ENCODE measurements at regions of chr5 and their contacts with region 1.

Region 1: GRCh38 chr5:140432916-140433315 is 31.3 kb downstream of the ANKHD1 start:
- DNase-seq: no peak
- H3K4me3 ChIP-seq: no peak overlapping the region
- H3K27ac ChIP-seq: no peak overlapping the region
- H3K4me1 ChIP-seq: no peaks in the 10 kb centered on the region
- H3K27me3 ChIP-seq: no peaks in the 10 kb centered on the region
- CTCF ChIP-seq: no peak

Region 2: DNA sequence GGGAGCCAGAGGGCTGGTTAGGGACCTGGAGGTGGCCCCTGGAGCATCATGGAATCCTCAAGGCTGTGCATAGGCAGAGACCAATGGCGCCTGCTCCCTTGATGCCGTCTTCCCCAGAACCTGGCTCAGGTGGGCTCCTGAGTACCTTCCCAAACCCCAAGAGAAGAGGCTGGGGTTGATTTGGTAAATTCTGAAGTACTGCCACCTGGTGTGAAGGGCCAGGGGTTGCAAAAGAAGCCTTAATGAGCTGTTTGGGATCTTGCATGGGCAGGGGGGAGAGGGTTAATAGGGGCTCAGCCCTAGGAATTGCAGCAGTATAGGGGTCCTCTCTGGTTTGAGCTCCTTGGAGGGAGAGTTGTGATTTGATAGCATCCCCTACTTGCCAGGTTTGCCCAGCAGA is 205.9 kb before region 1 on chr5:
- CTCF ChIA-PET with region 1: no interaction called
- POLR2A ChIA-PET with region 1: no interaction called
- intact Hi-C with region 1: no loop called
- DNase-seq: no peak
- H3K4me3 ChIP-seq: no peak overlapping the region
- H3K27ac ChIP-seq: no peak overlapping the region
- H3K4me1 ChIP-seq: no peaks in the 10 kb centered on the region
- H3K27me3 ChIP-seq: no peaks in the 10 kb centered on the region
- CTCF ChIP-seq: no peak

Region 3: DNA sequence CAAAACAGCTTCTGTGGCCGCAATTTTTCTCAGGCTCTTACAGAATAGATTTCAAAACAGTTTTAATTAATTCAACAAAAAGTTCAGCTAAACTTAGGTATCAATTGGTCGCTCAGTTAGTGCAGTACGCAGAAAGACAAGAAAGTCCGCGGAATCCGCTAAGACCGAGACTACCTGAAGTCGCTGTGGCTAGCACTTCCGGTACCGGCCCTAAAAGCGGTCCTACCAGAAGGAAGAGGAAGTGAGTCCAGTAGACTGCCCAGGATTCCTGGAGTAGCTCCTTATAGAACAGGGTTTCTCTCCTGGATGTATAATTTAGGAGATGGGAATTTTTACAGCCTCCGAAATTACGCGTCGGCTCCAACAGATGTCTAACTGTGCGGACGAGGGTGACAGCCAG is 644.9 kb after region 1 on chr5:
- CTCF ChIA-PET with region 1: no interaction called
- POLR2A ChIA-PET with region 1: interaction called, 10 read pairs
- intact Hi-C with region 1: no loop called
- DNase-seq: peak; percentile 63
- H3K4me3 ChIP-seq: peak overlapping the region; percentile 47
- H3K27ac ChIP-seq: peak overlapping the region; percentile 47
- H3K4me1 ChIP-seq: no peaks in the 10 kb centered on the region
- H3K27me3 ChIP-seq: no peaks in the 10 kb centered on the region
- CTCF ChIP-seq: no peak